Ovary (tissue), 10 donors: ENCODE measurements at regions of chr17 and their contacts with region 1.

Region 1: DNA sequence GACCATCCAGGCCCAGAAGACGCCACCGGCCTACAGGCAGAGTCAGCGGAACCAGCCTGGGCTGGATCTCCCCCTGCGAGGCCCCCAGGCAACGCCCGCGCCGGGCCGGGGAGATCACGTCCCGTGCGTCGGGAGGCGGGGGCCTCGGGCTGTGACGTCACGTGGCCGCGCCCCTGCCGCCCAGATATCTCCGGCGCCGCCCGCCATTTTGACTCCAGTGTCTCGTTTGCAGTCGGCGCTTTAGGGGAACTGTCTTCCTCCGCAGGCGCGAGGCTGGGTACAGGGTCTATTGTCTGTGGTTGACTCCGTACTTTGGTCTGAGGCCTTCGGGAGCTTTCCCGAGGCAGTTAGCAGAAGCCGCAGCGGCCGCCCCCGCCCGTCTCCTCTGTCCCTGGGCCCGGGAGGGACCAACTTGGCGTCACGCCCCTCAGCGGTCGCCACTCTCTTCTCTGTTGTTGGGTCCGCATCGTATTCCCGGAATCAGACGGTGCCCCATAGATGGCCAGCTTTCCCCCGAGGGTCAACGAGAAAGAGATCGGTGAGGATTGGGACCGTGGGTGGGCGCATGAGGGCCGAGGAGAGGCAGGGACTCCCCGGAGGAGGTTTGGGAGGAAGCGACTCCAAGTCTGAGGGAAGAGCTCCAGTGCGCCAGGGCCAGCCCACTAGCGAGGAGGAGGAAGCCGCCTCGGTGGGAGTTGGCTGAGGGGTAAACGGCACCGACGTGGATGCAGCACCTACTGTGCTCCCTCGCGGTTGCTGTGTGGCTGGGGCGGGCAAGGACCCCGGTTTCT is at the start of gene WSB1:
- DNase-seq: peak; percentile 95 to 98 (median 97)
- H3K4me3 ChIP-seq: peak within 1 kb of the TSS; percentile 93
- H3K27ac ChIP-seq: peak within 1 kb of the TSS; percentile 99 to 100
- H3K4me1 ChIP-seq: peaks cover 12% of the 10 kb centered on the region
- H3K27me3 ChIP-seq: no peaks in the 10 kb centered on the region
- CTCF ChIP-seq: peak in 2 of 3 donors; percentile 27 to 44
- EP300 ChIP-seq: peak; percentile 86
- POLR2A ChIP-seq: peak; percentile 99
- total RNA-seq, gene WSB1: 135 to 214 (median 172) TPM

Region 2: DNA sequence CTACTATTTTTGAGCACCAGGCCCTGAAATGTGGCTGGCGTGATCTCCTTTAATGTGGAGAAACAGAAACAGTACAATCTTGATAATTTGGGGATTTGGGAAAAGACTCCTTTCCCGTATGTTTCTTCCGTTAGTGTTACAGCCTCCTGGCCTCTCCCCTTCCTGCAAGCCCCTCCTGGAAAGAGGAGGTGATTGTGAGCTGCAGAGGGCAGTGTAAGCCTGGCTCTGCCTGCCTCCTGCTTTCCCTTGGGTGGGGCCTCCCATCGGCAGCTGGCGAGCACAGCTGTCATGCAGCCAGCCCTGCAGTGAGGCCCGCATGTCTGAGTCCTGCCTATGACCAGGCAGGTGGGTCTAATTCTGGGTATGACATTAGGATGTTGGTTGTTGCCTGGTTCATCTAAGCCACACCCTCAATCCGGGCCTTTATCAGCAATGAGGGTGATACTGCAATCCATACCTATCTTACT is 48.8 kb before region 1 on chr17:
- intact Hi-C with region 1: loop called in 3 of 4 experiments (anchors 5 to 10 kb)
- DNase-seq: peak; percentile 61 to 82 (median 78)
- H3K4me3 ChIP-seq: peak overlapping the region; percentile 8
- H3K27ac ChIP-seq: peak overlapping the region in 1 of 2 donors; percentile 61
- H3K4me1 ChIP-seq: peaks cover 5% of the 10 kb centered on the region
- H3K27me3 ChIP-seq: no peaks in the 10 kb centered on the region
- CTCF ChIP-seq: peak; percentile 27 to 55 (median 48)
- EP300 ChIP-seq: no peak
- POLR2A ChIP-seq: no peak

Region 3: DNA sequence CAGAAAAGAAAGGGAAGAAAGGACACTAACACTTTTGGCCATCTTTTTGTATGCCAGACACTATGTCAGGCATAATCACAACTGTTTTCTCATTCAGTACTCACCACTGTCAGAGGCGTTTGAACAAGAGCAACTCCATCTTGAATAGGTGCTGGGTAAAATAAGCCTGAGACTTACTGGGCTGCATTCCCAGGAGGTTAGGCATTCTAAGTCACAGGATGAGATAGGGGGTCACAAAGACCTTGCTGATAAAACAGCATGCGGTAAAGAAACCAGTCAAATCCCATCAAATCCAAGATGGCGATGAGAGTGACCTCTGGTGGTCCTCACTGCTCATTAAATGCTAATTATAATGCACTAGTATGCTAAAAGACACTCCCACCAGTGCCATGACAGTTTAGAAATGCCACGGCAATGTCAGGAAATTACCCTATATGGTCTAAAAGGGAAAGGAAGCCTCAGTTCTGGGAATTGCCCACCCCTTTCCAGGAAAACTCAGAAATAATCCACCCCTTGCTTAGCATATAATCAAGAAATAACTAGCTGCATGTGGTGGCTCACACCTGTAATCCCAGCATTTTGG is 614.0 kb after region 1 on chr17:
- intact Hi-C with region 1: no loop called
- DNase-seq: no peak
- H3K4me3 ChIP-seq: no peak overlapping the region
- H3K27ac ChIP-seq: no peak overlapping the region
- H3K4me1 ChIP-seq: no peaks in the 10 kb centered on the region
- H3K27me3 ChIP-seq: no peaks in the 10 kb centered on the region
- CTCF ChIP-seq: no peak
- EP300 ChIP-seq: no peak
- POLR2A ChIP-seq: no peak